Endothelial cell of umbilical vein (primary cell): ENCODE measurements at regions of chr6 and their contacts with region 1.

Region 1: DNA sequence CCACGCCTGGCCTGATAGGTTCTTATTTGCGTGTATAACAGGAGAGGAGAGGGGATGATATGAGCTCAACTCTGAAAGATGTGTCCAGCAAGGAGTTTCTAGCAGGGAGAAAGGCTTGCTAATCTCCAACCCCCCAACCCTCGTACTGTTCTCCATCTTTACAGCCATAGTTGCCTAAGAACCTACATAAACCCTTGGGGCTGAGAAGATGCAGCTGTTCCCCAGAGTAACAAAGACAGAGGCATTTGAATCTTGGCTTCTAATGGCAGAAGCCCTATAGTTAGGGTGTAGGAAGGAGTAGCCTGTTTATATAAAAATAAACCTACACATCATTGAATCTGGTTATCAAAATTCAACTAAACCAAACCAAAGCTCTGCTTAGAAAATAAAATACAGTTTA is 631.4 kb upstream of the SLC35B3 start:
- DNase-seq: no peak
- H3K4me3 ChIP-seq: no peak overlapping the region
- H3K27ac ChIP-seq: no peak overlapping the region
- H3K4me1 ChIP-seq: no peaks in the 10 kb centered on the region
- H3K27me3 ChIP-seq: no peaks in the 10 kb centered on the region
- CTCF ChIP-seq: no peak
- POLR2A ChIP-seq: no peak

Region 2: DNA sequence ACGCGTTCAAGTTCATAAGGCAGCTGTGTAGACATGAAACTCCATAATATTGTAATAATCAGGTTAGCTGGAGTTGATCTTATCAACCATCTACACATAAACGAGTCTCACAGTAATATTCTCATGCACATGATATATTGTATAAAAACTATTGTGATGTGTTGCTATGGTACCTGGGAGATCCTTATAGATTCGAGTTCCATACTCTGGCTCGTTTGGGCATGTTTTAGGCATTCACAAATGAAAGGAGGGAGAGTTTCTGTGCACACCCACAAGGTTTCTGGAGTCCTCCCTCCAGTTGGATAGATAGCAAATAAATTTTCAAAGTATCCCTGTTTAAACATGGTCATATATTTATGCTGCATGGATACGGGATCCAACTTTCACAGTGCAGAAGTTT is 63.9 kb before region 1 on chr6:
- CTCF ChIA-PET with region 1: no interaction called
- POLR2A ChIA-PET with region 1: no interaction called
- dilution Hi-C with region 1: no loop called
- intact Hi-C with region 1: no loop called
- DNase-seq: no peak
- H3K4me3 ChIP-seq: no peak overlapping the region
- H3K27ac ChIP-seq: no peak overlapping the region
- H3K4me1 ChIP-seq: no peaks in the 10 kb centered on the region
- H3K27me3 ChIP-seq: no peaks in the 10 kb centered on the region
- CTCF ChIP-seq: no peak
- POLR2A ChIP-seq: no peak

Region 3: DNA sequence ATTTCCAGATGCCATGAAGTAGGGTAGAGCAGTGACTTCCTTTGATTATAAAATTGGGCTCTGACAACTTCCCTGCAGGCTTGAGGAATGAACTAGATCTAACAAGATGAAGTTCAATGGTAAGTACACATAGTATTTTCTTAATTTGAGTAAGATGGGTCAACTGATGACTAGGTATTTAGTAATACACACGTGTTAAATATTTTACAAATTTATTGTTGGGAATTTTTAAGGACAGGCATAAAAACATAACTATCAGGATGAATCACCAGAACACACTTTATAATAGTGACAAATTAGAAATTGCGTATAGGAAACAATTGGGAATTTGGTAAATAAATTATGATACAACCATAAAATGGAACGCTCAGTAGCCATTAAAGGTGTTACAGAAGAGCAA is 131.0 kb after region 1 on chr6:
- CTCF ChIA-PET with region 1: no interaction called
- POLR2A ChIA-PET with region 1: no interaction called
- dilution Hi-C with region 1: no loop called
- intact Hi-C with region 1: loop called (anchors 5 kb)
- DNase-seq: no peak
- H3K4me3 ChIP-seq: no peak overlapping the region
- H3K27ac ChIP-seq: no peak overlapping the region
- H3K4me1 ChIP-seq: no peaks in the 10 kb centered on the region
- H3K27me3 ChIP-seq: no peaks in the 10 kb centered on the region
- CTCF ChIP-seq: no peak
- POLR2A ChIP-seq: no peak